Aorta (tissue), 5 donors: ENCODE measurements at regions of chr1 and their contacts with region 1.

Region 1: GRCh38 chr1:43296207-43296606 is 4.6 kb upstream of the TIE1 start:
- DNase-seq: no peak
- ATAC-seq: no peak
- H3K4me3 ChIP-seq: no peak overlapping the region
- H3K27ac ChIP-seq: no peak overlapping the region
- H3K4me1 ChIP-seq: no peaks in the 10 kb centered on the region
- H3K27me3 ChIP-seq: no peaks in the 10 kb centered on the region

Region 2: GRCh38 chr1:42195841-42196240 is 1100.4 kb before region 1 on chr1:
- intact Hi-C with region 1: loop called in 1 of 2 experiments (anchors 5 kb)
- DNase-seq: no peak
- ATAC-seq: no peak
- H3K4me3 ChIP-seq: no peak overlapping the region
- H3K27ac ChIP-seq: no peak overlapping the region
- H3K4me1 ChIP-seq: no peaks in the 10 kb centered on the region
- H3K27me3 ChIP-seq: no peaks in the 10 kb centered on the region